Sciatic nerve (tissue), 2 donors: ENCODE measurements at regions of chr4 and their contacts with region 1.

Region 1: DNA sequence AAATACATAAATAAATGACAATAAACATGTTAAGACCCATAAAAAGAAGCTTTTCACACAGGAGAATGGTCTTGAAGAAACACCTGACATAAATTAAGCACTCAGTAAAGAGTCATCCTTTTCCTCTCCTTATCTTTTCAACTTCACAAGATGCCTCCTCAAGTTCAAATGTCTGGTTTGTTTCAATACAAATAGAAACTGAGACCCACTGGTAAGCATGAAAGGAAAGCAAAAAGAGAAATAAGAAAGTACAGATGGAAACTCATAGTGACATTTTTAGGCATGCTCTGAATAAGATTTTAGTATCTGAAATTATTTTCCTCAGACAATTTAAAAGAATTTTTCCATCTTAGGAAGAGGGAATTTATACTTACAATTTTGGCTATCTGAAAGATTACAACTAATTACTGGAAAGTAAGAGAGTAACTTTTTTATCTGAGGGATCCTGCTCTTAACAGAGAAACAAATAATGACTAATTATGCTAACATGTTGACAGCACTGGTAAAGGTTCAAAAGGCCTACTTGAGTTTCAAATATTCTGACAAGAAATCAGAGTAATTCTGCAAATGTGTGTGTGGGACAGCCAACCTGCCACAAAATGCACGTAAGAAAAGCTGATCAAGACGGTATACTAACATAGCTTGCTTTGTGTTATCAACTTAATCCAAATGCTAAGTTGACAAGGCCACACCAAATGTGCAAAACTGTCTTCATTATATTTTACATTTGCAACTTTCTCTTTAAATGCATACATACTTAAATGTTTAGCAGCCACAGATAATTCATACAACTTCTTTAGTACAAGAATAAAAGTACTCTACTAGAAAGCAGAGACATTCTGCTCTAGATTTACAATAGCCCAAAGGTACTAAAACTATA is 113.0 kb downstream of the IQCM start:
- DNase-seq: no peak
- ATAC-seq: no peak

Region 2: GRCh38 chr4:148004228-148004857 is 1698.3 kb before region 1 on chr4:
- intact Hi-C with region 1: no loop called
- DNase-seq: peak; percentile 79
- ATAC-seq: peak; percentile 91

Region 3: DNA sequence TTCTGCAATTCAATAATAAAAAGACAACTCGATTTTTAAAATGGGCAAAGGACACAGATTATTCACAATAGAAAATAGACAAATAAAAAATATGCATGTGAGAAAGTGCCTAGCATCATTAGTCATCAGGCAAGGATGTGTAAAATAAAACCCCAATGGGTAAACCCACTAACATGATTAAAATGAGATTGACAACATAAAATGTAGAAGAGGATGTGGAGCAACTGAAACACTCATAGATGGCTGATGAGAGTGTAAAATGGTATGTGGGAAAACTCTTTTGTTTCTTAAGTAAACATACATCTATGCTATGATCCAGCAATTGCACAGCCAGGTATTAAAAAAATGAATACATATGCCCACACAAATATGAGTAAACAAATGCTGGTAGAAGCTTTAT is 64.6 kb before region 1 on chr4:
- intact Hi-C with region 1: no loop called
- DNase-seq: no peak
- ATAC-seq: no peak

Region 4: DNA sequence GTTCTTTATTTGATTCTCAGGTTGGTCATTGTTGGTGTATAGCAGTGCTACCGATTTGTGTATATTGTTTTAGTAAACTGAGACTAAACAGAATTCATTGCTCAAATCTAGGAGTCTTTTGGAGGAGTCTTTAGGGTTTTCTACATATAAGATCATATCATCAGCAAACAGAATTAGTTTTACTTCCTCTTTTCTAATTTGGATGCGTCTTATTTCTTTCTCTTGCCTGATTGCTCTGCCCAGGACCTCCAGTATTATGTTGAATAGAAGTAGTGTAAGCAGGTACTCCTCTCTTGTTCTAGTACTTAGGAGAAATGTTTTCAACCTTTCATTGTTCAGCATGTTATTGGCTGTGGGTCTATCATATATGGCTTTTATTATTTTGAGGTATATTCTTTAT is 20.4 kb after region 1 on chr4:
- intact Hi-C with region 1: loop called (anchors 1 kb)
- DNase-seq: no peak
- ATAC-seq: no peak

Region 5: DNA sequence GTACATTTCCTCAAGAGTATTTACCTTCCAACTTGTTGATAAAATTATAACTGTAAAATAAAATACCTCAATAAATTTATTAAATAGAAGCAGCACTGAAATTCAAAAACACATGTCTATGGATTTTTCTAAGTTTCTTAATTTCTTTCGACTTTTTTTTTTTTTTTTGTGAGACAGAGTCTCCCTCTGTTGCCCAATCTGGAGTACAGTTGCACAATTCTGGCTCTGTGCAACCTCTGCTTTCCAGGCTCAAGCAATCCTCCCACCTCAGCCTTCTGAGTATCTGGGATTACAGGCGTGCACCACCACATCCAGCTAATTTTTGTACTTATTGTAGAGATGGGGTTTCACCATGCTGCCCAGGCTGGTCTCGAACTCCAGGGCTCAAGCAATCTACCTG is 33.1 kb after region 1 on chr4:
- intact Hi-C with region 1: no loop called
- DNase-seq: no peak
- ATAC-seq: no peak